ENCODE measurements at regions of chr4 and their contacts with region 1.

Region 1: GRCh38 chr4:88591787-88592599 is at the start of gene HERC3:
- DNase-seq: peak; percentile 92
- H3K4me3 Mint-ChIP-seq: peak within 1 kb of the TSS; percentile 95
- H3K27ac Mint-ChIP-seq: peak within 1 kb of the TSS; percentile 85
- H3K4me1 Mint-ChIP-seq: peaks cover 41% of the 10 kb centered on the region
- H3K27me3 Mint-ChIP-seq: peaks cover 4% of the 10 kb centered on the region
- total RNA-seq, gene HERC3: 29.0 to 30.2 TPM

Region 2: DNA sequence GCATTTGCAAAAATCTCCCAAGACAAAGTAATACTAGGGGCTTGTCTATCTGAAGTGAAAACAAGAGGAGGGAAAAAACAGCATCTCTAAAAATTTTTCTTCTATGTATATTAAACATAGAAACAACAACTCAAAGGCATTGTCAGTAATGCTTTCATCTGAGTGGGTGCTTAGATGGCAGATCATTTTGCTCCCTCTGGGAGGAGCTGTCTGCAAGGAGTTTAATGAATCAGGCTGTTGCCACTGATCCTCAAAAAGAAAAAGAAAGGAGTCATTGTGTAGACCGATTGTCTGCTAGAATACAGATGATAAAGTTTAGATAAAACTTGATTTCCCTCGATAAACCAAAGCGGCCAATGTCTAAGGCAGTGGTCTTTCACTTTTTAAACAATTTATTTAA is 1321.8 kb before region 1 on chr4:
- CTCF ChIA-PET with region 1: no interaction called
- POLR2A ChIA-PET with region 1: no interaction called
- intact Hi-C with region 1: no loop called
- DNase-seq: no peak
- H3K4me3 Mint-ChIP-seq: no peak overlapping the region
- H3K27ac Mint-ChIP-seq: no peak overlapping the region
- H3K4me1 Mint-ChIP-seq: no peaks in the 10 kb centered on the region
- H3K27me3 Mint-ChIP-seq: peaks cover 6% of the 10 kb centered on the region

Region 3: DNA sequence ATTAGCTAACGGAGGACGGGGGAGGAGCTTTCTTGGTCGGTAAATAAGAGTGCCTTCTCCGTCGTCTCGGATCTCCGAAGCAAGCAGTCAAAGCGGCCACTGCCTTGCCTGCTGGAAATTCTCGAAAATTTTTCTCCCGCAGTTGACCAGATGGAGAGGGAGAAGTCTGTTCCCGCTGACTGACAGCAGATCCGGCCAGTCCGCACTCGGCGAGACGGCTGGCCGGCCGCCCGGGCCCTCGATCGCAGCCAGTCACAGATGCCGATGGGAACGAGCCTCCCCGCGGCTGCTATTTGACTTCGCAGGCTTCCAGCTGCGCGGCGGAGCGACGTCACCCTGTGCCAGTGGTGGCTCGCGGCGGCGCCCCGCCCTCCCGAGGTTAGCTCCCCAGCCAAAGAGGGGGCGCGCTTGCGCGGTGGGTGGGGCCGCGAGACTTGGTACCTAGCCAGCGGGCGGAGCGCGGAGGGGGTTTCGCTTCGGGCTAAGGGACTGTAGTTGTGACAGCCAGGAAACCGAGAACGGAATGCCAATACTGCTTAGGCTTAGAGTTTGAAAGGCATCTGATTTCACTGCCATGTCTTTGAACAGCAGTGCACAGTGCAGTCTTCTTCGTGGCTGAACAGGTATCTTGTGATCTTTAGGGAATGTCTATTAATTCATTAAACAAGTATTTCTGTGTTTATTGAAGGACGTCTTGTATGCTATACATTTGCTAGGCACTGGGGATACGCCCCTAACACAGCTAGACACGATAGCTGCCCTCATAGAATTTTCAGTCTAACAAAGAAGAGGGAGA is 307.4 kb before region 1 on chr4 and contains the start of gene PPM1K:
- CTCF ChIA-PET with region 1: no interaction called
- POLR2A ChIA-PET with region 1: no interaction called
- intact Hi-C with region 1: loop called (anchors 2 kb)
- DNase-seq: peak; percentile 100
- H3K4me3 Mint-ChIP-seq: peak within 1 kb of the TSS; percentile 99
- H3K27ac Mint-ChIP-seq: peak within 1 kb of the TSS; percentile 99
- H3K4me1 Mint-ChIP-seq: peaks cover 36% of the 10 kb centered on the region
- H3K27me3 Mint-ChIP-seq: no peaks in the 10 kb centered on the region
- total RNA-seq, gene PPM1K: 63.7 to 65.5 TPM

Region 4: DNA sequence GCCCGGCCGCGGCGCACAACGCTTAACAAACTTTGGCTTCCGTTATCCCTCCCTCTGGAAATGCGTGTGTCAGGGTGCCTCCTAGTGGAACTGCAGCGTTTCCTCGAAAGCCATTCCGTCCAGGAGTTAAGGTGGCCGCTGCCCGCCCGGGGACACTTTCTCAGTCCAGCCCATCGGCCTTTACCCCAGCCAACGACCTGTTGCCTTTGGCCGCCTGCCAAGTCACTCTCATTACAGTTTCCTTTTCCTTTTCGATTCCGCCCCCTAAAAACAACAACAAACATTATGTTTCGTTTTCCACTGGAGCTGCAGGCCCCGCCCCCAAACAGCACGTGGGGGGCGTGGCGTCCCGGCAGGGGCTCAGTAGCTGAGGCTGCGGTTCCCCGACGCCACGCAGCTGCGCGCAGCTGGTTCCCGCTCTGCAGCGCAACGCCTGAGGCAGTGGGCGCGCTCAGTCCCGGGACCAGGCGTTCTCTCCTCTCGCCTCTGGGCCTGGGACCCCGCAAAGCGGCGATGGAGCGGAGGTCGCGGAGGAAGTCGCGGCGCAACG is 135.2 kb before region 1 on chr4 and contains the start of gene HERC5:
- CTCF ChIA-PET with region 1: no interaction called
- POLR2A ChIA-PET with region 1: interaction called, 4 read pairs
- intact Hi-C with region 1: loop called (anchors 5 kb)
- DNase-seq: peak; percentile 94
- H3K4me3 Mint-ChIP-seq: peak within 1 kb of the TSS; percentile 100
- H3K27ac Mint-ChIP-seq: peak within 1 kb of the TSS; percentile 97
- H3K4me1 Mint-ChIP-seq: peaks cover 12% of the 10 kb centered on the region
- H3K27me3 Mint-ChIP-seq: peaks cover 3% of the 10 kb centered on the region
- total RNA-seq, gene HERC5: 32.3 to 34.0 TPM

Region 5: GRCh38 chr4:88613417-88613875 is 21.5 kb after region 1 on chr4:
- CTCF ChIA-PET with region 1: interaction called, 7 read pairs
- POLR2A ChIA-PET with region 1: interaction called, 28 read pairs
- intact Hi-C with region 1: loop called (anchors 1 kb)
- DNase-seq: peak; percentile 48
- H3K4me3 Mint-ChIP-seq: peak overlapping the region; percentile 58
- H3K27ac Mint-ChIP-seq: peak overlapping the region; percentile 87
- H3K4me1 Mint-ChIP-seq: peaks cover 78% of the 10 kb centered on the region
- H3K27me3 Mint-ChIP-seq: no peaks in the 10 kb centered on the region

Region 6: GRCh38 chr4:88659055-88659889 is 67.3 kb after region 1 on chr4:
- CTCF ChIA-PET with region 1: interaction called, 8 read pairs
- POLR2A ChIA-PET with region 1: no interaction called
- intact Hi-C with region 1: loop called (anchors 2 kb)
- DNase-seq: peak; percentile 51
- H3K4me3 Mint-ChIP-seq: no peak overlapping the region
- H3K27ac Mint-ChIP-seq: no peak overlapping the region
- H3K4me1 Mint-ChIP-seq: peaks cover 2% of the 10 kb centered on the region
- H3K27me3 Mint-ChIP-seq: no peaks in the 10 kb centered on the region

Region 7: DNA sequence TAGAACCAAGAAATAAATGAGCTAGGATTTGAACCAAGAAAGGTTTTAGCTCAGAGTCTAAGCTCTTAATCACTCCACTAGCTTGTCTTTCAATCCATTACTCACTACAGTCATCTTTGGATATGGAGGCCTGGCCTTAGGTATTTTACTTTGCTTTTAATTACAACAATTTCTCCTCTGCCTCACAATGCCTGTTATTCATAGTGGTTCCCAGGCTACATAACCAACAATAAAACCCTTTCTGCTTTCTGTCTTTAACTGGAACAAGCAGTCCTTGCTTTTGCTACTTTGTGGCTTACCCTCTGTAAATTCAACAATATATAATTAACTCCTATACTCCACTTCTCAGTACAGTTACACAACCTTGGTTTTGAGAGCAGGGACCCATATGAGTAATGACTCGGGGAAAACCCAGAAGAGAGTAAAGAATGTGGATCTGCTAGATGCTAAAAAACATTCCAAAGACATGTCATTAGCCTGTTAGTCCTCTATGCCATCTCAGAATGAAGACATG is 200.3 kb after region 1 on chr4:
- CTCF ChIA-PET with region 1: no interaction called
- POLR2A ChIA-PET with region 1: no interaction called
- intact Hi-C with region 1: loop called (anchors 2 kb)
- DNase-seq: no peak
- H3K4me3 Mint-ChIP-seq: no peak overlapping the region
- H3K27ac Mint-ChIP-seq: no peak overlapping the region
- H3K4me1 Mint-ChIP-seq: peaks cover 19% of the 10 kb centered on the region
- H3K27me3 Mint-ChIP-seq: peaks cover under 1% of the 10 kb centered on the region

Region 8: GRCh38 chr4:88985088-88985773 is 393.2 kb after region 1 on chr4:
- CTCF ChIA-PET with region 1: no interaction called
- POLR2A ChIA-PET with region 1: no interaction called
- intact Hi-C with region 1: no loop called
- DNase-seq: no peak
- H3K4me3 Mint-ChIP-seq: no peak overlapping the region
- H3K27ac Mint-ChIP-seq: no peak overlapping the region
- H3K4me1 Mint-ChIP-seq: no peaks in the 10 kb centered on the region
- H3K27me3 Mint-ChIP-seq: no peaks in the 10 kb centered on the region

Measured in activated CD4-positive, alpha-beta memory T cell treated with anti-CD3 and anti-CD28 coated beads for 36 hours (primary cell).